ENCODE measurements at regions of chr10 and their contacts with region 1.

Region 1: DNA sequence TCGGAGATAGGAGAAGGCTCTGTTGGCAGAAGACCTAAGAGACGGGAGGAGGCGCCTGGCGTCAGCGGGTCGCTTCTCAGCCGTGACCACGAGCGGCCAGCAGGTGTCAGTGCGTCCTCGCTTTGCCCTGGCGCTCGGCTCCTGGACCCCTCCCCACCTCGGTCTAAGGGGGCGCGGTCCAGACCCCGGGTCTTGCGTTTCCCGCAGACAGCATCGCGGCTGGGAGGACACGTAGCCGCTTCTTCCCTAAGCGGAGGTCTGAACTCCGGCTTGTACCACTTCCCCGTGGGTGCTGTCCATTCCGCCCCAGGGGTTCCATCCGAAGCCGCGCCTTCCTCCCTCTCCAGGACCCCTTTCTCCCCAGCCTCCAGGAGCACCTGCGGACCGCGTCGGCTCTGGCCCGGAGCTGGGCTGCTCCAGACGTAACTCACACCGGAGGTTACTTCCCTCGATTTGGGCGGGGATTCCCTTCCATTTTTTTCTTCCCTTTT is 593 bp upstream of the ADRA2A start:
- DNase-seq: no peak
- ATAC-seq: peak; percentile 93
- H3K4me3 ChIP-seq: peak overlapping the region; percentile 12 to 70 (median 47); a peak in 5 of 6 replicates
- H3K27ac ChIP-seq: no peak overlapping the region
- H3K4me1 ChIP-seq: no peaks in the 10 kb centered on the region
- H3K27me3 ChIP-seq: peaks cover 7 to 26% of the 10 kb centered on the region in 2 experiments
- CTCF ChIP-seq: peak; percentile 93
- EP300 ChIP-seq: no peak
- POLR2A ChIP-seq: no peak
- RAD21 ChIP-seq: peak; percentile 87

Region 2: GRCh38 chr10:111316722-111317212 is 240.5 kb after region 1 on chr10:
- CTCF ChIA-PET with region 1: no interaction called
- POLR2A ChIA-PET with region 1: no interaction called
- in situ Hi-C with region 1: no loop called
- intact Hi-C with region 1: no loop called
- DNase-seq: no peak
- ATAC-seq: no peak
- H3K4me3 ChIP-seq: no peak overlapping the region
- H3K27ac ChIP-seq: no peak overlapping the region
- H3K4me1 ChIP-seq: no peaks in the 10 kb centered on the region
- H3K27me3 ChIP-seq: no peaks in the 10 kb centered on the region
- CTCF ChIP-seq: no peak
- EP300 ChIP-seq: no peak
- POLR2A ChIP-seq: no peak
- RAD21 ChIP-seq: no peak

Region 3: GRCh38 chr10:111598436-111599059 is 522.3 kb after region 1 on chr10:
- CTCF ChIA-PET with region 1: interaction called, 11 read pairs
- POLR2A ChIA-PET with region 1: no interaction called
- in situ Hi-C with region 1: no loop called
- intact Hi-C with region 1: no loop called
- DNase-seq: peak; percentile 53
- ATAC-seq: peak; percentile 90
- H3K4me3 ChIP-seq: no peak overlapping the region
- H3K27ac ChIP-seq: no peak overlapping the region
- H3K4me1 ChIP-seq: no peaks in the 10 kb centered on the region
- H3K27me3 ChIP-seq: no peaks in the 10 kb centered on the region
- CTCF ChIP-seq: peak; percentile 80
- EP300 ChIP-seq: no peak
- POLR2A ChIP-seq: no peak
- RAD21 ChIP-seq: peak; percentile 34; the same call in 1 of the 2 replicates